ENCODE measurements at regions of chr12 and their contacts with region 1.

Region 1: GRCh38 chr12:113232840-113233585 is 11.7 kb downstream of the TPCN1 start:
- DNase-seq: peak; percentile 94
- ATAC-seq: peak; percentile 83
- H3K4me3 ChIP-seq: peak overlapping the region in 4 of 5 experiments; percentile 7 to 31 (median 17)
- H3K4me3 Mint-ChIP-seq: peak overlapping the region; percentile 82
- H3K27ac ChIP-seq: peak overlapping the region; percentile 54 to 73
- H3K27ac Mint-ChIP-seq: peak overlapping the region; percentile 87
- H3K4me1 ChIP-seq: peaks cover 67 to 76% of the 10 kb centered on the region in 2 donors
- H3K4me1 Mint-ChIP-seq: peaks cover 78% of the 10 kb centered on the region
- H3K27me3 ChIP-seq: no peaks in the 10 kb centered on the region
- H3K27me3 Mint-ChIP-seq: no peaks in the 10 kb centered on the region
- CTCF ChIP-seq: peak; percentile 74

Region 2: DNA sequence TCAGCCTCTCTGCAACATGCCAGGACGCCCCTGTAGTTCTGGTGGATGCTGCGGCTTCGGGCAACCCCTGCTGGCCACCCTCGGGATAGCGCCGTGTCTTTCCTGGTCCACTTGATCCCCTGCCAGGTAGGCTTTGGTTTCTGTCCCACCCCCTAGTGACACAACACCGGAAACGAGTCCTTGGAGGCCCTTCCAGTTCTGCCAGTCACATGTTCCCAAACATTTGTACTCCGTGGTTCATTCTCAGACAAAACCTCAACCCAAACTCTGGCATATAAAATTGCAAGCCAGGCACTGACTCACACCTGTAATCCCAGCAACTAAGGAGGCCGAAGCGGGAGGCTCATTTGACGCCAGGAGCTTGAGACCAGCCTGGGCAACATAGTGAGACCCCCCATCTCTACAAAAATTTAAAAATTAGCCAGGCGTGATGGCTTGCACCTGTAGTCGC is 134.5 kb before region 1 on chr12:
- CTCF ChIA-PET with region 1: no interaction called
- POLR2A ChIA-PET with region 1: interaction called, 11 read pairs
- intact Hi-C with region 1: no loop called
- DNase-seq: peak; percentile 82
- ATAC-seq: peak; percentile 87
- H3K4me3 ChIP-seq: no peak overlapping the region
- H3K4me3 Mint-ChIP-seq: no peak overlapping the region
- H3K27ac ChIP-seq: peak overlapping the region in 1 of 2 donors; percentile 15
- H3K27ac Mint-ChIP-seq: peak overlapping the region; percentile 73
- H3K4me1 ChIP-seq: peaks cover 9 to 20% of the 10 kb centered on the region in 2 donors
- H3K4me1 Mint-ChIP-seq: peaks cover 18% of the 10 kb centered on the region
- H3K27me3 ChIP-seq: peaks cover 0 to under 1% (median 0%) of the 10 kb centered on the region in 4 experiments
- H3K27me3 Mint-ChIP-seq: no peaks in the 10 kb centered on the region
- CTCF ChIP-seq: peak; percentile 95

Region 3: GRCh38 chr12:113208041-113208934 is 24.7 kb before region 1 on chr12:
- CTCF ChIA-PET with region 1: interaction called, 32 read pairs
- POLR2A ChIA-PET with region 1: interaction called, 56 read pairs
- intact Hi-C with region 1: loop called (anchors 1 kb)
- DNase-seq: peak; percentile 95
- ATAC-seq: peak; percentile 75
- H3K4me3 ChIP-seq: peak overlapping the region in 3 of 5 experiments; percentile 4 to 47 (median 5)
- H3K4me3 Mint-ChIP-seq: peak overlapping the region; percentile 86
- H3K27ac ChIP-seq: peak overlapping the region; percentile 91 to 94
- H3K27ac Mint-ChIP-seq: peak overlapping the region; percentile 99
- H3K4me1 ChIP-seq: peaks cover 46 to 59% of the 10 kb centered on the region in 2 donors
- H3K4me1 Mint-ChIP-seq: peaks cover 62% of the 10 kb centered on the region
- H3K27me3 ChIP-seq: no peaks in the 10 kb centered on the region
- H3K27me3 Mint-ChIP-seq: no peaks in the 10 kb centered on the region
- CTCF ChIP-seq: no peak

Region 4: GRCh38 chr12:113221181-113221997 is 11.6 kb before region 1 on chr12 and contains the start of gene TPCN1:
- CTCF ChIA-PET with region 1: interaction called, 53 read pairs
- POLR2A ChIA-PET with region 1: interaction called, 54 read pairs
- intact Hi-C with region 1: loop called (anchors 1 kb)
- DNase-seq: peak; percentile 100
- ATAC-seq: peak; percentile 89
- H3K4me3 ChIP-seq: peak within 1 kb of the TSS; percentile 69 to 92 (median 86)
- H3K4me3 Mint-ChIP-seq: peak within 1 kb of the TSS; percentile 90
- H3K27ac ChIP-seq: peak within 1 kb of the TSS; percentile 72 to 93
- H3K27ac Mint-ChIP-seq: peak within 1 kb of the TSS; percentile 89
- H3K4me1 ChIP-seq: peaks cover 32 to 55% of the 10 kb centered on the region in 2 donors
- H3K4me1 Mint-ChIP-seq: peaks cover 41% of the 10 kb centered on the region
- H3K27me3 ChIP-seq: no peaks in the 10 kb centered on the region
- H3K27me3 Mint-ChIP-seq: no peaks in the 10 kb centered on the region
- CTCF ChIP-seq: peak; percentile 21
- total RNA-seq, gene TPCN1: 258 and 267 TPM in 2 replicates

Region 5: DNA sequence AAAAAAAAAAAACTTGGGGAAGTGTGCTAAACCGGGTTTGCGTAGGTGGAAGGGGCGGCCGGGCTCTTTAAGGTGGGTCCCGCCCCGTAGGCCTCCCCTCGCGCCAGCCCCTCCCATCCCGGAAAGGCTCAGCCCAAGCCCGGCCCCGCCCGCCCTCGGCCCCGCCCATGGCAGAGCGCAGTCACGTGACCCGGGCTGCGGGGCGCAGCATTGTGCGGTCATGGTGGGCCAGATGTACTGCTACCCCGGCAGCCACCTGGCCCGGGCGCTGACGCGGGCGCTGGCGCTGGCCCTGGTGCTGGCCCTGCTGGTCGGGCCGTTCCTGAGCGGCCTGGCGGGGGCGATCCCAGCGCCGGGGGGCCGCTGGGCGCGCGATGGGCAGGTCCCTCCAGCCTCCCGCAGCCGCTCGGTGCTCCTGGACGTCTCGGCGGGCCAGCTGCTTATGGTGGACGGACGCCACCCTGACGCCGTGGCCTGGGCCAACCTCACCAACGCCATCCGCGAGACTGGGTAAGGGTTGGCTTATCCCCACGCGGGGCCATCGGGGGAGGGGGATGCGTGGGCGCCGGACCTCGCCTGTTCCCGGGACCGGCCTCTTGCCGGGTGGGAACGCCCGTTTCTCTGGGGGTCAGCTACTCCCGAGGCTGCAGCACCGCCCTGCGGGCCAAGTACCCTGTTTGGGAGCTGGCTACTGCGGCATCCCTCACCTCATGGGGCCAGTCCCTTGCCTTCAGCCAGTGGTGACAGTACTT is 125.5 kb after region 1 on chr12 and contains the start of gene PLBD2:
- CTCF ChIA-PET with region 1: no interaction called
- POLR2A ChIA-PET with region 1: no interaction called
- intact Hi-C with region 1: loop called (anchors 1 kb)
- DNase-seq: peak; percentile 97
- ATAC-seq: peak; percentile 97
- H3K4me3 ChIP-seq: peak within 1 kb of the TSS; percentile 51 to 90 (median 68)
- H3K4me3 Mint-ChIP-seq: peak within 1 kb of the TSS; percentile 91
- H3K27ac ChIP-seq: peak within 1 kb of the TSS; percentile 36 to 79
- H3K27ac Mint-ChIP-seq: peak within 1 kb of the TSS; percentile 91
- H3K4me1 ChIP-seq: peaks cover 11 to 18% of the 10 kb centered on the region in 2 donors
- H3K4me1 Mint-ChIP-seq: peaks cover 12% of the 10 kb centered on the region
- H3K27me3 ChIP-seq: peaks cover 0 to 2% (median 0%) of the 10 kb centered on the region in 4 experiments
- H3K27me3 Mint-ChIP-seq: no peaks in the 10 kb centered on the region
- CTCF ChIP-seq: no peak
- total RNA-seq, gene PLBD2: 11.6 and 14.0 TPM in 2 replicates

Measured in B cell (primary cell).